ENCODE measurements at regions of chr2 and their contacts with region 1.

Region 1: DNA sequence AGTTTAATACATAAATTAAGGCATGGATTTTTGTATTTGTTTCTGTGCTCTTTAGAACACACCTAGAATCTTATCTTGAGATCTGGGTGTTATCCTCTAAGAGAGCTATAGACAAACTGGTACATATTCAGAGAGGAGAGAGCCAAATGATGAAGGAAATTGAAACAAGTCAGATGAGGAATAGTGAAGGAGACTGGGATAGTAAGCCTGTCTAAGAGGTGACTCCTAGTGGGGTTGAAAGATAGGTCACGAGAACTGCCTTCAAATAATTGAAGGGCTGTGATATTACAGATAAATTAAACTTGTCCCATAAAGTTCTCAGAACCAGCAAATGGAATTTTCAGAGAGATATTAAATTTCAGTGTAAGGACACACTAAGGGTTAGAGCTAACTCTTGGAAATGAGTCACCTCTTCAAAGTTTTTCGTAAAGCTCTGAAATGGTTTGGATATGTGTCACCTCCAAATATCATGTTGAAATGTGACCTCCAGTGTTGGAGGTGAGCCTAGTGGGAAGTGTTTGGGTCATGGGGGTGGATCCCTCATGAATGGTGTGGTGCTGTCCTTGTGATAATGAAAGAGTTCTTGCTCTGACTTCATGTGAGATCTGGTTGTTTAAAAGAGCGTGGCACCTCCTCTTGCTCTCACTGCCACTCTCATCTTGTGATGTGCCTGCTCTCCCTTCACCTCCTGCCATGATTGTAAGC is 87.2 kb downstream of the BABAM2 start:
- DNase-seq: no peak
- H3K4me3 Mint-ChIP-seq: peak overlapping the region; percentile 10
- H3K27ac Mint-ChIP-seq: peak overlapping the region; percentile 73
- H3K4me1 Mint-ChIP-seq: peaks cover 23% of the 10 kb centered on the region
- H3K27me3 Mint-ChIP-seq: no peaks in the 10 kb centered on the region

Region 2: GRCh38 chr2:27954771-27955383 is 22.9 kb before region 1 on chr2:
- intact Hi-C with region 1: loop called (anchors 1 kb)
- DNase-seq: peak; percentile 76
- H3K4me3 Mint-ChIP-seq: peak overlapping the region; percentile 66
- H3K27ac Mint-ChIP-seq: peak overlapping the region; percentile 86
- H3K4me1 Mint-ChIP-seq: peaks cover 67% of the 10 kb centered on the region
- H3K27me3 Mint-ChIP-seq: no peaks in the 10 kb centered on the region

Region 3: DNA sequence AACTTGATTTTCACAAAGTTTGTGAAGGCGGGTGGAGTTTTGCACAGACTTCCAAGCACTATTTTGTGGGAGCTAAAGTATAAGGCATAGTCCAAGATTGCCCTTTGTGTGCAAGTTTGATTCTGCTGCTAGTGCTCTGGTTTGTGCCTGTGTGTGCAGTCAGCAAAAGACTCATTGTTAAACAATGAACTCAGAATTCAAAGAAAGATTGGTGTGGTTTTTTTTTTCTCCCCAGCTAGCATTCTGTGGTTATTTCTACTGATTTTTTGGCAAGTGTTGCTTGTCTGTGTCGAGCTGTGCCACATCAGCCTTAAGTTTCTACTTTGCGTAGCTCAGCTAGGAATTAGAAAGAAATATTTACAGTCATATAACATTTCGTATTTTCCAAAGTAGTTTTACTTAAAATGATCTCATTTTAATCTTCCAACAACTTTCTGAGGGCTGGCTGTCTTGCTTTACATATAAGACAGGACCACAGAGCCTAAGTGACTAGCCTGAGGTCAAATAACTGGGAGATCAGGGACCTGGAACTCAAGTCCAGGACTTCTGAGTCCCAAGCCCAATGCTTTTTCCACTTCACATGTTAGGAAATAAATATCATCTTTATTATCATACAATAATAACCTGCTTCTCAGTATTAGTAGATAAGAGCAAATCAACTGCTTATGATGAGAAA is 17.4 kb before region 1 on chr2:
- intact Hi-C with region 1: loop called (anchors 1 kb)
- DNase-seq: peak; percentile 77
- H3K4me3 Mint-ChIP-seq: peak overlapping the region; percentile 25
- H3K27ac Mint-ChIP-seq: peak overlapping the region; percentile 75
- H3K4me1 Mint-ChIP-seq: peaks cover 70% of the 10 kb centered on the region
- H3K27me3 Mint-ChIP-seq: no peaks in the 10 kb centered on the region